ENCODE measurements at regions of chr11 and their contacts with region 1.

Region 1: GRCh38 chr11:67317205-67317887 is 14.0 kb downstream of the SSH3 start:
- DNase-seq: peak; percentile 96
- H3K4me3 ChIP-seq: peak overlapping the region; percentile 22 to 75 (median 60)
- H3K27ac ChIP-seq: peak overlapping the region; percentile 34
- H3K4me1 ChIP-seq: peaks cover 6% of the 10 kb centered on the region
- H3K27me3 ChIP-seq: no peaks in the 10 kb centered on the region
- CTCF ChIP-seq: peak; percentile 96 to 97
- POLR2A ChIP-seq: peak; percentile 87

Region 2: DNA sequence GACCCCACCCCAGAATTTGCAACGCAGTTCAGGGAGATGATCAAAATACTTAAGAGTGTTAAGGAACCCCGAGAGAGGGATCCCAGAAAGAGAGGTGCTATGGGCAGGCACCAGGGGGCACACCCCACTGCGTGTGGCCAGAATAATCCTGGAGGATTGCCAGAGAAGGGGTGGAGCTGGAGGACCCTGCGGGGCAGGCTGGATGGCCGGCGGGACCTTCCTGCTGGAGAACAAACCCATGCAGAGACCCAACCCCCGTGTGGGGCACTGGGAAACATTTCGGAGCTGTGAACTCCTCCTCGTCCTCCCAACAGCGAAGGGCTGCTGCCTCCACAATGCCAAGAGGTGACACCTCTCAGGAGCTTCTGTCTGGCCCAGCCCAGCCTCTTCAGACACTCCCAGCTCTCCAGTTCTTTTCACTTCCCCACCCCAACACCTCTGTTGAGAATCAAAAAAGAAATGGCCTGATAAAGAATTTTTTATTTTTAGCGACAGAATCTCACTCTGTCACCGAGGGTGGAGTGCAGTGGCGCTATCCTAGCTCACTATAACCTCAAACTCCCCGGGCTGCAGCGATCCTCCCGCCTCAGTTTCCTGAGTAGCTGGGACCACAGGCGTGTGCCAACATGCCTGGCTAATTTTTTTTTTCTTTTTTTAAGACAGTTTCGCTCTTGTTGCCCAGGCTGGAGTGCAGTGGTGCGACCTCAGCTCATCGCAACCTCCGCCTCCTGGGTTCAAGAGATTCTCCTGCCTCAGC is 235.1 kb before region 1 on chr11:
- CTCF ChIA-PET with region 1: interaction called, 36 read pairs
- POLR2A ChIA-PET with region 1: no interaction called
- dilution Hi-C with region 1: no loop called
- intact Hi-C with region 1: loop called (anchors 1 kb)
- DNase-seq: peak; percentile 30
- H3K4me3 ChIP-seq: no peak overlapping the region
- H3K27ac ChIP-seq: no peak overlapping the region
- H3K4me1 ChIP-seq: no peaks in the 10 kb centered on the region
- H3K27me3 ChIP-seq: no peaks in the 10 kb centered on the region
- CTCF ChIP-seq: peak in 1 of 2 donors; percentile 18
- POLR2A ChIP-seq: no peak

Region 3: DNA sequence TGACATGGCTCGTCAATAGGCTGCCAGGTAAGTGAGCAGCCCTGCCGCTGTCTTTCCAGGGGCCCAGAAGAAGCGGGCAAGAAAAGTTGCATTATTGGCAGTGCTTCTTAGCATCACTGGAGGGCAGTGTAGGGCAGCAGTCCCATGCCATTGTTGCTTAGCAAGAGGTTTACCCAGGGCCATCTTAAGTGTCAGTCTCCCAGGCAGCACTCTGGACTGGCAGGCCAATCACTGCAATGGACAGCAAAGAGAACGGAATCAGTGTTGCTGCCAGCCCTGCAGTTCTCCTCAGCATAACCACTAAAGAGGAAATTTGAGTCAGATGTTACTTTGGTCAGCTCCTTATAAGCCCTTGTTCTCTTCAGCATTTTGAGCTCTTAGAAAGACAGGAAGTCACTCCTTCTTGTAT is 64.5 kb before region 1 on chr11:
- CTCF ChIA-PET with region 1: interaction called, 16 read pairs
- POLR2A ChIA-PET with region 1: interaction called, 3 read pairs
- dilution Hi-C with region 1: no loop called
- intact Hi-C with region 1: no loop called
- DNase-seq: peak; percentile 44
- H3K4me3 ChIP-seq: no peak overlapping the region
- H3K27ac ChIP-seq: no peak overlapping the region
- H3K4me1 ChIP-seq: no peaks in the 10 kb centered on the region
- H3K27me3 ChIP-seq: no peaks in the 10 kb centered on the region
- CTCF ChIP-seq: peak; percentile 20 to 47
- POLR2A ChIP-seq: no peak

Region 4: DNA sequence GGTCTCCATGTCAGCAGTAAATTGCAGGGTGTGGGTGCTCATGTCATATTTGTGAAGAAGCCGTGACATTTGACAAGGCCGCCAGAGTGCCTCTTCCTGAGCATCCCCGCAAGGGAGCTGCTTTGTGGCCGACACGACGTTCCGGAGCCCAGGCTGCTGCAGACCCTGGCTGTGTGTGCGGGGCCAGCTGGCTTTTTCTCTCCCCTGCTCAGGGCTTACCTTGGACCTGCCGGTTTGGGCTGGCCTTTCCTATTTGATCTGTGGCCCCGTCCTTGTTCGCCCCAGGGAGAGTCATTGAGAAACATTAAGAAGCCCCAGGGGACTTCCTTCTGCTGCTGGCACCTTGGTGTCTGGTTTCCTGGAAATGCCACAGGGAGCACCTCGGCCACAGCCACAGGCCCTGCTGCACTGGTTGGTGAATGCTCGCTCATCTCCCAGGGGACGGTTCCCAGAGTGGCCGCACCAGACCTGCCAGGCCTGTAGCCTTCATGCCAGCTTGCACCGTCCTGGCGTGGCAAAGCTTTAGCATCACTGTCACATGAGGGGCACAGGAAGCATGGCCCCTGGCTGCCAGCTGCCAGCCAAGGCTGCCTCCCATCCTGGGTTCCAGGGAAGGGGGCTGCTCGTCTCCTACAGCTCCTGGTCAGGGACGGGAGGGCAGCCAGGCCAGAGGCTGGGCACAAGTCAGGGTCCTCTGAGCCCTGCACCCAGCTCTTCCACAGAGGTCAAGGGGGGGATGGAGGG is 45.6 kb before region 1 on chr11:
- CTCF ChIA-PET with region 1: interaction called, 35 read pairs
- POLR2A ChIA-PET with region 1: interaction called, 4 read pairs
- dilution Hi-C with region 1: no loop called
- intact Hi-C with region 1: loop called (anchors 1 kb)
- DNase-seq: no peak
- H3K4me3 ChIP-seq: no peak overlapping the region
- H3K27ac ChIP-seq: no peak overlapping the region
- H3K4me1 ChIP-seq: peaks cover 36% of the 10 kb centered on the region
- H3K27me3 ChIP-seq: no peaks in the 10 kb centered on the region
- CTCF ChIP-seq: no peak
- POLR2A ChIP-seq: no peak

Region 5: GRCh38 chr11:67288452-67289225 is 28.7 kb before region 1 on chr11:
- CTCF ChIA-PET with region 1: interaction called, 23 read pairs
- POLR2A ChIA-PET with region 1: interaction called, 6 read pairs
- dilution Hi-C with region 1: no loop called
- intact Hi-C with region 1: loop called (anchors 1 kb)
- DNase-seq: peak; percentile 86
- H3K4me3 ChIP-seq: peak overlapping the region; percentile 52 to 65 (median 54)
- H3K27ac ChIP-seq: peak overlapping the region; percentile 61
- H3K4me1 ChIP-seq: peaks cover 22% of the 10 kb centered on the region
- H3K27me3 ChIP-seq: no peaks in the 10 kb centered on the region
- CTCF ChIP-seq: peak; percentile 44 to 53
- POLR2A ChIP-seq: no peak

Region 6: DNA sequence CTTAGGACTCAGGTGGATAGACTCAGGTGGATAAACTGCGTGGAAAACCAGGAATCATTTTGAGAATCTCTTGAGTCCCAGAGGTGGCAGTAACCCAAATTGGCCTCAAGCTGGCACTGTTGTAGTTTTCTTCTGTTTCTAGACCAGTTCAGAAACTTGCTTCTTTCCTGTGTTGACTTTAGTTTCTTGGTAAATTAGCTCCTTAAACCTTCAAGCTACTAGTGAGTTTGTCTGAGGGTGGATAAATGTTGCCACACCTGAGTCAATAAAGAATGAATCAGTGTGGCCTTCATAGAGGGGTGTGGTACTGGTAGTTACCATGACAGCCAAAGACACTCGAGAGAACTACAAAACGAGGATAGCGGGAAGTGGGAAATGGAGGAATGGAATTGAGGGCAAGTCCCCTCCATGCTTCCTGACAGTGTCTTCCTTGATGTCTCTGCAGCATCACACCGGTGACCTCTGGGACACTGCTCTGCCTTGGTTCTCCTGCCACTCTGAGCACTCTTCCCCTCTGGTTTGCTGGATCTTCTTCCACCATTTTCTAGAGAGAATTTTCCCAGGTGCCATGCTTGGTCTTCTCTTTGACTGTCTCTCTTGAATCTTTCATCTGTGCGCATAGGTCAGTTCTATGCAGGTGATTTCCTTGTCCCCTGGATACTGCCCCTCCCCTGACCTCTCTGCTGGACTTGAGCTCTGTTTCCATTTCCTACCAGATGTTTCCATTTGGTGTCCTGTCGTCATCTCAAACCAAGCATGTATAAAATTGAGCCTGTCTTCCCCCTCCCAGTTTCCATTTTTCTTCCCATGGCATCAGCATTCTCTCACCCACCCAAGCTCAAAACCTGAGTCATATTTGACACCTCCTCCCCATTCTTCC is 28.8 kb after region 1 on chr11:
- CTCF ChIA-PET with region 1: interaction called, 17 read pairs
- POLR2A ChIA-PET with region 1: interaction called, 5 read pairs
- dilution Hi-C with region 1: no loop called
- intact Hi-C with region 1: no loop called
- DNase-seq: peak; percentile 49
- H3K4me3 ChIP-seq: no peak overlapping the region
- H3K27ac ChIP-seq: no peak overlapping the region
- H3K4me1 ChIP-seq: peaks cover 7% of the 10 kb centered on the region
- H3K27me3 ChIP-seq: no peaks in the 10 kb centered on the region
- CTCF ChIP-seq: peak; percentile 70 to 81
- POLR2A ChIP-seq: no peak

Region 7: DNA sequence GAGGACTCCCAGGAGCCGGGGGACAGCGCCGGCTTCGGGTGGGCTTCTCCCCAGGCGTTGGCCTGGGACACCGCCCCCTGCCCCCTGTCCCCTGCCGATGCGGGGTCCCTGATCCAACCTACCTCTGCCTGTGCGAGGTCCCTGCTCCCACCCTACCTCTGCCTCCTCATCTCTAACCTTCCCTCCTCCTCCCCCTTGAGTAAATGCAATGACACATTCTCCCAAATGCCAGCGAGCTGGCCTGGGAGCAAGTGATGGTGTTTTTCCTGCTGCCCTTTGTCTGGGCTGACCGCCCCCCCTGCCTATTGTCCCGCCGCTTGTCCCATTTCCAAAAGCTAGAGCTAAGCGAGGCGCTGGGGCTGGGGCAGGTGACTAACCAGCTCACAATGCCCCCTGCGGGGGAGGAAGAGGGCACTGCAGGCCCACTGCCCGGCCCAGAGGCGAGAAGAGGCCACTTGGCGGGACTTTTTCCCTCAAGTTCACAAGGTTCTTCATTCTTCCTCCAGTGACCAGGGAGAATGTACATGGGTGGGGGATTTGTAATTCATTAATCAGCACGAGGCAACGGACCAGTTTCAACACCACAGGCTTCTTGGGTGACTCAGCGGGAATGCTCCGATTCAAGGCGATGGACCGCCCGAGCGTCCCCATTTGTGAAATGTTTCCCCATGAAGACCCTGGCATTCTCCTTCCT is 56.7 kb after region 1 on chr11:
- CTCF ChIA-PET with region 1: interaction called, 83 read pairs
- POLR2A ChIA-PET with region 1: no interaction called
- dilution Hi-C with region 1: no loop called
- intact Hi-C with region 1: no loop called
- DNase-seq: peak; percentile 82
- H3K4me3 ChIP-seq: peak overlapping the region; percentile 28 to 86 (median 64)
- H3K27ac ChIP-seq: peak overlapping the region; percentile 33
- H3K4me1 ChIP-seq: peaks cover 37% of the 10 kb centered on the region
- H3K27me3 ChIP-seq: peaks cover 0 to 3% of the 10 kb centered on the region in 2 experiments
- CTCF ChIP-seq: peak; percentile 60 to 79
- POLR2A ChIP-seq: peak; percentile 58